Activated CD4-positive, alpha-beta T cell treated with anti-CD3 and anti-CD28 coated beads for 36 hours (primary cell): ENCODE measurements at regions of chr22 and their contacts with region 1.

Region 1: DNA sequence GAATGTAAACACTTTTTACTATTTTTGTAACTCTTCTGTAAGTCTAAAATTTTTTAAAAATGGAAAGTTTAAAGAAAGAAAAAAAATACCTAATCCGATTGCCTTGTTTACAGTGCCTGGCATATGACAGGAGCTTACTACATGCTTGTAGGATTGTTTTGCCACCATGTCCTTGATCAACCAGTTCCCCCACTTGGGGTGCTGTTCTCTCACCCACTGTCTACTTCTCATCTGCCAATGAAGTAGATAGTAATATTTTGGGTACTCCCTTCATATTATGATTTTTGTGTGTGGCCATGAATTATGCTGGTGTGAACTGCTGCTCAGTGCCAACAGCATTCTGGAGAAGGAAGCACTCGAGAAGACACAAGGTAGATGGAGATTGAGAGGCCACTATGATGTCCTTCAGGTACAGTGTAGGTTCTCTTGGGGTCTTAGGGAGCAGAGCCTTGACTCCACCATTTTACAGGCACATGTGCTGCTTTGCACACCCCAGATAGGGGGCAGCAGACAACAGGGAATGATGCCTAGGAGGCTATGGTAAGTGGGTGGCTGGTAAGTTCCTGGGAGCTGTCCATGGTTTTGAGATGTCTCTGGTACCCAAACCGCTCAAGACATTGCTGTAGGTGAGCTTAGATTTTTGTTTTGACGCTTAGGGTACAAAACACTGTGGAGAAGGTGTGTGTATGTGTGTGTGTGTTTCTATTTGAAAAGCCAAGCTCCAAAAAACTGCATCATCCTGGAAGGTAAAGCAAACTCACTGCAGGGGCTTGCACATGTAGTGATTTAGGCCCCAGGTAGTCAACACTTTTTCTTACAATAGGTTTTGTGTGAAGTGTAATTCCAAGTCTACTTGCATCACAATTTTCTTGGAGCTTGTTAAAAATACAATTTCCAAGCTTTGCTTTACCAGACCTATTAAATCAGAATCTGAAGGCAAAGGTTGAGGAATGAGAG is 494.5 kb upstream of the LARGE1 start:
- DNase-seq: peak; percentile 70
- ATAC-seq: no peak
- H3K4me3 Mint-ChIP-seq: no peak overlapping the region
- H3K27ac Mint-ChIP-seq: no peak overlapping the region
- H3K4me1 Mint-ChIP-seq: no peaks in the 10 kb centered on the region
- H3K27me3 Mint-ChIP-seq: no peaks in the 10 kb centered on the region

Region 2: GRCh38 chr22:34502821-34503220 is 88.1 kb after region 1 on chr22:
- CTCF ChIA-PET with region 1: no interaction called
- POLR2A ChIA-PET with region 1: no interaction called
- intact Hi-C with region 1: no loop called
- DNase-seq: no peak
- ATAC-seq: no peak
- H3K4me3 Mint-ChIP-seq: no peak overlapping the region
- H3K27ac Mint-ChIP-seq: no peak overlapping the region
- H3K4me1 Mint-ChIP-seq: no peaks in the 10 kb centered on the region
- H3K27me3 Mint-ChIP-seq: peaks cover 4% of the 10 kb centered on the region

Region 3: DNA sequence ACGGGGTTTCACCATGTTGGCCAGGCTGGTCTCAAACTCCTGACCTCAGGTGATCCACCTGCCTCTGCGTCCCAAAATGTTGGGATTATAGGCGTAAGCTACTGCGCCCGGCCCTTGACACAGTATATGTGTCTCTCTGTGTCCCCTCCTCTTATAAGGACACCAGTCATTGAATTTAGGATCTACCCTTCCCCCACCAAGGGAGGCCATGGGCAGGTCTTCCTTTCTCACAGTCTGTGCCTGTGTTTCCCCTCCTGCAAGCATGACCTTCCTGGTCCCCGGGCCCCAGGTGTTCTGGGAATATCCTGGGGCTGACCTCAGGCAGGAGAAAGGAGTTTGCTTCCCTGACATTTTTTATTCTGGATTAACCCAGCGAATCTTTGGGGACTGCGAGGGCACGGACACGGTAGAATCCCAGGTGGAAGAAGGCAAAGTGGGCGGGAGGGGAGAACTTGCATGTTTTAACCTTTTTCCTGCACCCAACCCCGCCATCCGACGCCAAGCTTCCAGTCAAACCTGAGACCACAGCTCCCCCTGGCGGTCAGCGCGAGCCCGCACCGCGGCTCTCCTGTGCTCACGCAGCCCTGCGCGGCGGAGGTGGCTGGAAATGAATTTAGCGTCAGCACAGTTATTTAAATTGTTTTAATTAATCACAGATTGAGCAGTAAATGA is 609.1 kb after region 1 on chr22:
- CTCF ChIA-PET with region 1: interaction called, 4 read pairs
- POLR2A ChIA-PET with region 1: no interaction called
- intact Hi-C with region 1: loop called (anchors 1 to 2 kb)
- DNase-seq: peak; percentile 87
- ATAC-seq: no peak
- H3K4me3 Mint-ChIP-seq: no peak overlapping the region
- H3K27ac Mint-ChIP-seq: no peak overlapping the region
- H3K4me1 Mint-ChIP-seq: no peaks in the 10 kb centered on the region
- H3K27me3 Mint-ChIP-seq: peaks cover 25% of the 10 kb centered on the region

Region 4: DNA sequence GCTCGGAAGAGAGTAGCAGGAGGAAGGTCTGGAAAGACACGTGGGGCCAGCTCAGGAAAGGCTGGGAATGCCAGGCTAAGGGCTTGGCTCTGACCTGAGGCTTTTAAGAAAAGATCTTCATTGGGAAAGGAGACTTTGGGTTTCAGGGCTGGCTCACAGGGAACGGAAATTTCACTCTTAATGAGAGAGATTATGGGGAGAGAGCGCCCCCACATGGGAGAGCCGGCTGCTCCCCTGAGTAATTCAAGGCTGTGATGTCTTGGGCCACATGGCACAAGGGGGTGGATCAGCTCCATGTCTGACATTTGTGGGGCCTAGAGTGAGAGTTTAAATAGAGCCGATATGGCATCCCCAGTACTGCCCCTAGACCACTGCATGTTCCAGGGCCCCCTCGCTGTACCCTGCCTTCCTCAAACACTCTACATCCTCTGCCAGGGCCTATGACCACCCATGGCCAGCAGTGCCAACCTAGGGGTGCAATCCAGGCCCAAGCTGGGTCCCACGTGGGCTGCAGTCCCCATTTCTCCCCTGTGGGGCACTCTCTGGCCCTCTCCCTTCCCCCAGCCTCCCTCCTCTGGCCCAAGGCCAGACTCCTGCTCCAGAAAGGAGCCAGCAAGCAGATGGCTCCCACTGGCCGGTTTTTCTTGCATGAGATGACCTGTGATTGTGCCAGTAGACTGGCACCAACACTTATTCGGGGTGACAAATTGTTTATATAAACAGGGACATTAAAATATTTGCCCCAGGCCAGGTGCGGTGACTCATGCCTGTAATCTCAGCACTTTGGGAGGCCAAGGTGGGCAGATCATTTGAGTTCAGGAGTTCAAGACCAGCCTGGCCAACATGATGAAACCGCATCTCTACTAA is 726.4 kb after region 1 on chr22:
- CTCF ChIA-PET with region 1: no interaction called
- POLR2A ChIA-PET with region 1: no interaction called
- intact Hi-C with region 1: loop called in 1 of 2 experiments (anchors 10 kb)
- DNase-seq: peak; percentile 36
- ATAC-seq: no peak
- H3K4me3 Mint-ChIP-seq: no peak overlapping the region
- H3K27ac Mint-ChIP-seq: no peak overlapping the region
- H3K4me1 Mint-ChIP-seq: no peaks in the 10 kb centered on the region
- H3K27me3 Mint-ChIP-seq: peaks cover 6% of the 10 kb centered on the region

Region 5: DNA sequence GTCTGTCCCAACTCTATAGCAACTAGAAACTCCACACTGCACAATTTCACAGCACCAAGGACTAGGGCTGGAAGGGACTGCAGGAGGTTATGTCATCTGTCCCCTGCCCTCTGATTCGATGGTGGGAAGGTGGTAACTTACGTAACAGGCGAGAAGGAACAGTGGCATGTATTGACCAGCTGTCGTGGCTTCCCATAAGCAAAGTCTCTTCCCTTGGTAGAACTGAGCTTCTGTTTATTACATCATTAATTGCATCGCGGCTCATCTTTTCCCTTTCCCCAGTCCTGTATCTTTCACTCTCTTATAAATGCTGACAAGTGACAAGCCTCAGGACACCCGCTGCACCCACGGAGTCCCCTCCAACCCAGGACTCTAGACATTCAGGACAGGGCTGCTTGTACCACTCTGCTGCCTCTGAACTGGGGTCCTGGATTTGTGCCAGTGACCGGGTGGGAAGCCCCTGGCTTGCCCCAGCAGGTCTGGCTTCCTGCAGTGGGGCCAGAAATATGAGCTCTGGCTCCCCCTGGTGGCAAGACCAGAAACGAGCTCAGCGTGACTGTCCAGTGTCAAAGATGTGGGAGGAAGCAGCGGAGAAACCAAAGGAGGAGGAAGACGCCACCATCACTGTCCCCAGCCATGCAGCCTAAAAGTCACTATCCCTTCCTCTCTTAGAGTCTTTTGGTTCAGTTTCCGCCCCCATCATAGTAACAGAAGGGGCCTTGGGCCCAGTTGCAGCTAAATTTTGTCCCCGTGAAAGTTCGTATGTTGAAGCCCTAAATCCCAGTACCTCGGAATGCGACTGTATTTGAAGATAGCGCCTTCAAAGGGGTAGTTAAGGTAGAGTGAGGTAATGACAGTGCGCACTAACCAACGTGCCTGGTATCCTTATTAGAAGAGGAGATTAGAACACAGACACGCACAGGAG is 735.7 kb after region 1 on chr22:
- CTCF ChIA-PET with region 1: interaction called, 3 read pairs
- POLR2A ChIA-PET with region 1: no interaction called
- intact Hi-C with region 1: loop called (anchors 1 to 10 kb)
- DNase-seq: peak; percentile 81
- ATAC-seq: peak; percentile 72
- H3K4me3 Mint-ChIP-seq: no peak overlapping the region
- H3K27ac Mint-ChIP-seq: no peak overlapping the region
- H3K4me1 Mint-ChIP-seq: no peaks in the 10 kb centered on the region
- H3K27me3 Mint-ChIP-seq: peaks cover 20% of the 10 kb centered on the region